Activated CD8-positive, alpha-beta T cell treated with anti-CD3 and anti-CD28 coated beads, Interleukin-2, amount 10 ng/mL, durations not matched to agents 7 days and 5 days (primary cell): ENCODE measurements at regions of chr1 and their contacts with region 1.

Region 1: DNA sequence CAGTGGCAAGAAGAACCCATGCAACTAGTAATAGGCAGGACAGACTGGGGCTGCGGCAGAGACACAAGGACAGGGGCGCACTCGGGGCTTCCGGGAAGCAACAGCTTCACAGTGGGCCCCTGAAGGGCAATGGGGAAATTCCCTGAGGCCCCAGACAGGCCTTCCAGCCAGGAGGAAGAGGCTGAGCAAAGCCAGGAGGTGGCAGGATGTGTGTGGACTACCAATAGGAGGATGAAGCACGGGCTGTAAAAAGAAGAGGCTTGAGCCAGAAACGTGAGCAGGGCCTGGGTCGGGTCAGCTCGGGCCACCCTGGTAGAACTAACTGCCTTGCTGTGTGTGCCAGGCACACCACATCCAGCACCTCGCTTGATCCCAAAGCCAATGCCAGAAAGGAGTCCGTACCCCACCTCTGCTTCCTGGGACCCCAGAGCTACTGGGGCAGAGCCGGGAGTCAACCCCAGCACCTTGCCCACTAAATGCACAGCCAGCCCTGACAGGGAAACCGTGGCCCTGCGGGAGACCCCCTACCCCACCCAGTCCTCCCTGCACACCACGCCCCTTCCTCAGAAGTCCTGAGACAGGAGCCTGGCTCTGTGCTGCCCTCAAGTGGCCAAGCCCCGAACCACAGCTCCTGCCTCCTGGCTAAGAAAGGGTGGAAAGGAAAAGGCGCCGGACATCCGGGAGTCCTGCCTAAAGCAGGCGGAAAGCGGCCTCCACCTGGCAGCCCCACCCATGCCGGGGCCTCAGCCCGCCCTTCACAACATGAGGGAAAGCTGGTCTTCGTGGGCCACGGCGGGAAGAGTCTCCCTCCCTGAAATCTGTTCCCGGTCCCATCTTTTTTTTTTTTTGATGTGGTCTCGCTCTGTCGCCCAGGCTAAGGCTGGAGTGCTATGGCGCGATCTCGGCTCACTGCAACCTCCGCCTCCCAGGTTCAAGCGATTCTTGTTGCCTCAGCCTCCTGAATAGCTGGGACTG is 33.7 kb downstream of the TTC39A start:
- DNase-seq: peak; percentile 78
- ATAC-seq: peak; percentile 79
- H3K4me3 Mint-ChIP-seq: peak overlapping the region; percentile 57
- H3K27ac Mint-ChIP-seq: peak overlapping the region; percentile 79
- H3K4me1 Mint-ChIP-seq: peaks cover 44% of the 10 kb centered on the region
- H3K27me3 Mint-ChIP-seq: no peaks in the 10 kb centered on the region

Region 2: GRCh38 chr1:51235673-51236530 is 60.8 kb before region 1 on chr1 and contains the start of gene RNF11:
- CTCF ChIA-PET with region 1: interaction called, 12 read pairs
- POLR2A ChIA-PET with region 1: interaction called, 4 read pairs
- DNase-seq: peak; percentile 93
- ATAC-seq: peak; percentile 96
- H3K4me3 Mint-ChIP-seq: peak within 1 kb of the TSS; percentile 88
- H3K27ac Mint-ChIP-seq: peak within 1 kb of the TSS; percentile 90
- H3K4me1 Mint-ChIP-seq: peaks cover 31% of the 10 kb centered on the region
- H3K27me3 Mint-ChIP-seq: no peaks in the 10 kb centered on the region
- total RNA-seq, gene RNF11: 27.5 to 29.0 TPM

Region 3: DNA sequence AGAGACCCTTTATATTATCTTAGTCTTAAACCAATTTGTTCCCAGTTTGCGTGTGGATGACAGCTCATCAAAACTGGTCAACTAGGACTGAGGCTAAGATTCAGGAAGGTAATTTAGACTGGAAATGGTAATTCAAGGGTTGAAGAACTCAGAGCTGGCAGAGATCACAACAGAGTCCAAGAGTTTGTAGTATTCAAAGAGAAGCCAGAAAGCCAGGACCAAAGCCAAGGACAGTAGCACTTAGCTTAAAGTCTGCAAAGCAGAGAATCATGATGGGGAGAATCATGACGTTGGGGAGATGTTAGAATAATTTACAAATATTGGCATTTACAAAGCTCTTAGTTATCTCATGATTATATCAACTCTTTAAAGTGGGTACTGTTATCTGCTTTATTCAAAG is 28.0 kb before region 1 on chr1:
- CTCF ChIA-PET with region 1: interaction called, 30 read pairs
- POLR2A ChIA-PET with region 1: no interaction called
- DNase-seq: no peak
- ATAC-seq: no peak
- H3K4me3 Mint-ChIP-seq: peak overlapping the region; percentile 16
- H3K27ac Mint-ChIP-seq: peak overlapping the region; percentile 31
- H3K4me1 Mint-ChIP-seq: peaks cover 40% of the 10 kb centered on the region
- H3K27me3 Mint-ChIP-seq: no peaks in the 10 kb centered on the region

Region 4: GRCh38 chr1:51280321-51280978 is 16.2 kb before region 1 on chr1:
- CTCF ChIA-PET with region 1: interaction called, 15 read pairs
- POLR2A ChIA-PET with region 1: no interaction called
- DNase-seq: no peak
- ATAC-seq: no peak
- H3K4me3 Mint-ChIP-seq: no peak overlapping the region
- H3K27ac Mint-ChIP-seq: no peak overlapping the region
- H3K4me1 Mint-ChIP-seq: peaks cover 12% of the 10 kb centered on the region
- H3K27me3 Mint-ChIP-seq: no peaks in the 10 kb centered on the region

Region 5: GRCh38 chr1:51433269-51433971 is 136.8 kb after region 1 on chr1:
- CTCF ChIA-PET with region 1: no interaction called
- POLR2A ChIA-PET with region 1: no interaction called
- DNase-seq: no peak
- ATAC-seq: peak; percentile 33
- H3K4me3 Mint-ChIP-seq: no peak overlapping the region
- H3K27ac Mint-ChIP-seq: peak overlapping the region; percentile 31
- H3K4me1 Mint-ChIP-seq: peaks cover 28% of the 10 kb centered on the region
- H3K27me3 Mint-ChIP-seq: no peaks in the 10 kb centered on the region

Region 6: DNA sequence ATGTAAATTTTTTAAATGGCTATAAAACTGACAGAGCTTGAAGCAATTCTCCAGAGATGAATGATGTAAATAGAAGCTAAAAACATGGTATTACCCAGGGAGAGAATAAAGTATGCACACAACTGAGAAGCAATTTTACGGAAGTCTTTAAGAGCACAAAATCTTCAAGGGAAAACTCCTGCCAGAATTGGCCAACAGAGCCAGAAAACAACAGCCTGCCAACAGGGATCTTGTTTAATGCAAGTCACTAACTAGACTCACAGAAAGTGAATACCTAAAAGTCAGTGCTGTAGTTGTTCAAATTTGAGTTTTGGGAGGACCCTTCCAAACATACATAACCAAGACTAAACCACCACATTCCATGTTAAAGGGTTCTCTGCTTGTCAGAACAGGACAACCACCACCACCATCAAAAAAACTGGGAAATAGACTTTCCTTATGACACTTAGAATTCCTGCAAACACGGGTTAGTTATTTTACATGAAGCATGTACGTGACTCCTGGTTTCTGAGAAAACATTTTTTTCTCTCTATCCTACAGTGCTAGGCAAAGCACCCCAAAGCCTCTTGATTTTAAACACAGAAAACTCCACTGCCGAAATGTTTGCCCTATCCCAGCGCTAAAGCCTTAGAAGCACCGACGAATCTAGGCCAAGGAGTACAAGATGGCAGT is 220.8 kb after region 1 on chr1:
- CTCF ChIA-PET with region 1: no interaction called
- POLR2A ChIA-PET with region 1: no interaction called
- DNase-seq: no peak
- ATAC-seq: no peak
- H3K4me3 Mint-ChIP-seq: peak overlapping the region; percentile 80
- H3K27ac Mint-ChIP-seq: peak overlapping the region; percentile 80
- H3K4me1 Mint-ChIP-seq: peaks cover 65% of the 10 kb centered on the region
- H3K27me3 Mint-ChIP-seq: no peaks in the 10 kb centered on the region